GM10248 (cell line): ENCODE measurements at regions of chr3 and their contacts with region 1.

Region 1: GRCh38 chr3:108477511-108478147 is 32.8 kb downstream of the MYH15 start:
- DNase-seq: peak; percentile 36
- CTCF ChIP-seq: peak; percentile 75

Region 2: DNA sequence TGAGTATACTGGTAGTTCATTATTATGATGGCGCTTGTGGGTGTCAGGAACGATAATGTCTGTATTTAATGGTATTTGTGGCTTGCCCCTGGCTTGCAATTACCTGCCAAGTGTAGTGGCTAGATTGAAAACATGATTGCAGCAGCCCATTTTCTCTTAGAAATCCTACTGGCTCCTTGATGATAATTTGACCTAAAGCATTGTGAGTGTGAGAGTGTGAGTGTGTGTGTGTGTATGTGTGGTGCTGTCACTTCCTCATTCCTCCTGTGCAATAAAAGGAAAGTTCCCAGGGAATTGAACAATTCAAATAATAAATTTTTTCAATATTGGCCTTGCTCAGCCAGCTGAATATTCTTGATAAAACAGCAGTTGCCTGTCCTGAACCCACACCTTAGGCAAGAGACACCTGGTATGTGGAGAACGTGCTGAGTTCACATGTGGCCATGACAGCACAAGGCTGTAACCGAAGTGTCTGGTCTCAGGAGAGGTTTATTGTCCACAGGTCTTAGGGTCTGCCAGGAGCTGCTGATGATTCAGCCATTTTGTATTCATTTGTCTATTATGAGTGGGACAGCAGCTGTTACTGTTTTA is 580.1 kb before region 1 on chr3:
- CTCF ChIA-PET with region 1: no interaction called
- POLR2A ChIA-PET with region 1: no interaction called
- DNase-seq: no peak
- CTCF ChIP-seq: no peak

Region 3: DNA sequence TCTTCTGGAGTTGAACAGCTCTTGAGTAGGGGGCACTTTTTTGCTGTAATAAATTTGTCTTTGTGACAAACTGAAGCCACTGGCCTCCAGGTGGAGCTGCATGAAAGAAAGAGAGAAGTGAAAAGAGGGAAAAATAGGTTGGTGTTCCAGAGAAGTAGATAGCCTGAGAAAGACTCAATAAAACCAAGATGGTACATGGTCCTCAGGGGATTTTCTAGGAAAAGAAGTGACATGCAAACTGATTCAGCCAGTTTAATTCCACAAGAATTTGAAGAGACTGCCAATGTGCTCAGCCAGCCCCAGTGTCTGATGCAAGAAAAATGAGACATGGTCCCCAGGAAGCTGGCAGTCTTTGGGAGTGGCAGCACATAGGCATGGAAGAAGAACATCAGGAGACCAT is 539.5 kb before region 1 on chr3:
- CTCF ChIA-PET with region 1: interaction called, 16 read pairs
- POLR2A ChIA-PET with region 1: no interaction called
- DNase-seq: no peak
- CTCF ChIP-seq: peak; percentile 40

Region 4: GRCh38 chr3:108271626-108272025 is 206.0 kb before region 1 on chr3:
- CTCF ChIA-PET with region 1: no interaction called
- POLR2A ChIA-PET with region 1: no interaction called
- DNase-seq: no peak
- CTCF ChIP-seq: no peak

Region 5: DNA sequence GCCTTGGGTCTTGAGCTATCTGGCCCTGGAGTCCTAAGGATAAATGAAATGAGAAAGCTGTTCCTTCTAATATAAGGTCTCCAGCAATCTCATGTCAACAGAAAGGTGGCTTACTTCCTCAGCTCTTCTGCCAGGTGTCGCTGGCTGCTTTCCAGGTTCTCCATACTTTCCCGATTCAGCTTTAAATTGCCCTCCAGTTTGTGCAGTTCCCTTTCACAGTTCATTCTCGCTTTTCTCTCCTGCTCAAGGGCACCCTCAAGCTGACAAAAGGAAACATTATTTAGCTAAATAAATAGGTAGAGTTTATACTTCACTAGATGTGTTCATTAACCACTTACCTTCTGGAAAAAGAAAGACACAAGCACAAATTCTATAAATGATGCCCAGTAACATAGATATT is 40.2 kb before region 1 on chr3:
- CTCF ChIA-PET with region 1: interaction called, 11 read pairs
- POLR2A ChIA-PET with region 1: no interaction called
- DNase-seq: no peak
- CTCF ChIP-seq: no peak

Region 6: DNA sequence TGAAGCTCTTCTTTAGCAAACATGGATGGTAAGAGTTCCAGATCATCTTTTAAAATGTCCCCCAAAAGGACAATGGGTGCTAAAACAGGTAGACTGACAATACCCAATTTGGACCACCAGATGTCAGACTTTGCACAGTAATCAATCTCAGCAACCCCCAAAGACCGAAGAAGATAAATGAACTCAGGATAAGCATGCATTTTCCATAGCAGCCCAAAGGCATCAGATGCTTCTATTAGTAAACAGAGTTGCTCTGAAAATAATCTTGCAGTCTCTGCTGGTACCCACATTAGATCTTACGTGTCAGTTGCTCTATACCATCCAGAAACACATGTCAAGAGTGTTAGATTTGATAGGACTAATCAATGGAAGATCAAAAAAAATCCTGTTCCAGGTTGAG is 12.1 kb after region 1 on chr3:
- CTCF ChIA-PET with region 1: interaction called, 42 read pairs
- POLR2A ChIA-PET with region 1: no interaction called
- DNase-seq: peak; percentile 53
- CTCF ChIP-seq: peak; percentile 74